ENCODE measurements at regions of chr1 and their contacts with region 1.

Region 1: GRCh38 chr1:220164116-220164515 is 70.2 kb downstream of the IARS2 start:
- DNase-seq: no peak
- ATAC-seq: no peak
- H3K4me3 ChIP-seq: no peak overlapping the region
- H3K4me3 Mint-ChIP-seq: no peak overlapping the region
- H3K27ac ChIP-seq: no peak overlapping the region
- H3K27ac Mint-ChIP-seq: no peak overlapping the region
- H3K4me1 ChIP-seq: no peaks in the 10 kb centered on the region
- H3K4me1 Mint-ChIP-seq: peaks cover 0 to 5% (median 0%) of the 10 kb centered on the region in 3 donors
- H3K27me3 ChIP-seq: no peaks in the 10 kb centered on the region
- H3K27me3 Mint-ChIP-seq: no peaks in the 10 kb centered on the region

Region 2: DNA sequence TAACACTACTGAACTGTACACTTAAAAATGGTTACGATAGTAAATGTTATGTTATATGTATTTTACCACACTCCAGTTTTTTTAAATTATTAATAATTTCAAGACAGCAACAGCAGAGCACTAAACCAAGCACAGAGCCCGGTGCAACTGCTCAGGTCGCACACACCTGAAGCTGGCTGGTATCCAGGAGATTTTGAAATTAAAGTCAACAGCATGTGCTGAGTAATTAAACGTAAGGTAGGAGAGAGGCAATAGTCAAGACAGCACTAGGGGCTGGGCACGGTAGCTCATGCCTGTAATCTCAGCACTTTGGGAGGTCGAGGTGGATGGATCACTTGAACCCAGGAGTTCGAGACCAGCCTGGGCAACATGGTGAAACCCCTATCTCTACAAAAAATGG is 200.7 kb before region 1 on chr1:
- CTCF ChIA-PET with region 1: no interaction called
- POLR2A ChIA-PET with region 1: no interaction called
- DNase-seq: no peak
- ATAC-seq: no peak
- H3K4me3 ChIP-seq: no peak overlapping the region
- H3K4me3 Mint-ChIP-seq: no peak overlapping the region
- H3K27ac ChIP-seq: no peak overlapping the region
- H3K27ac Mint-ChIP-seq: no peak overlapping the region
- H3K4me1 ChIP-seq: no peaks in the 10 kb centered on the region
- H3K4me1 Mint-ChIP-seq: no peaks in the 10 kb centered on the region
- H3K27me3 ChIP-seq: no peaks in the 10 kb centered on the region
- H3K27me3 Mint-ChIP-seq: no peaks in the 10 kb centered on the region

Region 3: GRCh38 chr1:220149742-220150141 is 14.4 kb before region 1 on chr1:
- CTCF ChIA-PET with region 1: no interaction called
- POLR2A ChIA-PET with region 1: interaction called, 3 to 10 read pairs
- DNase-seq: no peak
- ATAC-seq: no peak
- H3K4me3 ChIP-seq: no peak overlapping the region
- H3K4me3 Mint-ChIP-seq: no peak overlapping the region
- H3K27ac ChIP-seq: no peak overlapping the region
- H3K27ac Mint-ChIP-seq: peak overlapping the region in 1 of 2 donors; percentile 44
- H3K4me1 ChIP-seq: no peaks in the 10 kb centered on the region
- H3K4me1 Mint-ChIP-seq: no peaks in the 10 kb centered on the region
- H3K27me3 ChIP-seq: no peaks in the 10 kb centered on the region
- H3K27me3 Mint-ChIP-seq: no peaks in the 10 kb centered on the region

Region 4: DNA sequence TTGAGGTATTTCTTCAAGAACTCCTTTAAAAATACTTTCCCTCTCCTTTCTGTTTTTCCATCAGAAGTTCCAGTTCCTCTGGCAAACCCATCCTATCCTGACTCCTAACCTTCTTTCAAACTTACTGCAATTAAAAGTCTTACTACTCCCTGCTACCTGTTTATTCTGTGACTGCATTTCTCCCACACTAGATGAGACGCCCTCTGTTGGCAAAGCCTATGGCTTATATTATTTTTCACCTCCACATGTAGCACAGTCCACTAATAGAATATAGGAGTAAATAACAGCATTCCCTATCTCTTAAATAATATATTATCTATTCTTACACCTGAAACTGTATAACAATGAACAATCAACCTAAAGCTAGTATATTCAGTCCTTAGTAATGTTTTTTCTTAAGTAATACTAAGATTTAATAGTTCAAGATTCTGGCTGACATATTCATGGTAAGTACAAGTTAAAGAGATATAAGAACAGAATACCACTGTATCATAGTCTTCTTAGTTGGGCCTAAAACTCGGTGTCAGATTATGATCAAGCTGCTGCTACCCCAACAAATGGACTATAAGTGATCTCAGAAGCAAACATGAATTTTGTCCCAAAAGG is 53.4 kb after region 1 on chr1:
- CTCF ChIA-PET with region 1: no interaction called
- POLR2A ChIA-PET with region 1: no interaction called
- DNase-seq: peak in 1 of 35 experiments; percentile 14
- ATAC-seq: no peak
- H3K4me3 ChIP-seq: no peak overlapping the region
- H3K4me3 Mint-ChIP-seq: no peak overlapping the region
- H3K27ac ChIP-seq: no peak overlapping the region
- H3K27ac Mint-ChIP-seq: no peak overlapping the region
- H3K4me1 ChIP-seq: no peaks in the 10 kb centered on the region
- H3K4me1 Mint-ChIP-seq: peaks cover 29 to 44% (median 30%) of the 10 kb centered on the region in 3 donors
- H3K27me3 ChIP-seq: no peaks in the 10 kb centered on the region
- H3K27me3 Mint-ChIP-seq: no peaks in the 10 kb centered on the region

Region 5: GRCh38 chr1:220281159-220281574 is 117.1 kb after region 1 on chr1:
- CTCF ChIA-PET with region 1: no interaction called
- POLR2A ChIA-PET with region 1: no interaction called
- DNase-seq: no peak
- ATAC-seq: no peak
- H3K4me3 ChIP-seq: no peak overlapping the region
- H3K4me3 Mint-ChIP-seq: no peak overlapping the region
- H3K27ac ChIP-seq: no peak overlapping the region
- H3K27ac Mint-ChIP-seq: no peak overlapping the region
- H3K4me1 ChIP-seq: no peaks in the 10 kb centered on the region
- H3K4me1 Mint-ChIP-seq: no peaks in the 10 kb centered on the region
- H3K27me3 ChIP-seq: no peaks in the 10 kb centered on the region
- H3K27me3 Mint-ChIP-seq: peaks cover 3 to 8% of the 10 kb centered on the region in 2 donors